ENCODE measurements at regions of chr7 and their contacts with region 1.

Region 1: GRCh38 chr7:86926732-86927131 is 132.7 kb downstream of the ELAPOR2 start:
- DNase-seq: no peak

Region 2: DNA sequence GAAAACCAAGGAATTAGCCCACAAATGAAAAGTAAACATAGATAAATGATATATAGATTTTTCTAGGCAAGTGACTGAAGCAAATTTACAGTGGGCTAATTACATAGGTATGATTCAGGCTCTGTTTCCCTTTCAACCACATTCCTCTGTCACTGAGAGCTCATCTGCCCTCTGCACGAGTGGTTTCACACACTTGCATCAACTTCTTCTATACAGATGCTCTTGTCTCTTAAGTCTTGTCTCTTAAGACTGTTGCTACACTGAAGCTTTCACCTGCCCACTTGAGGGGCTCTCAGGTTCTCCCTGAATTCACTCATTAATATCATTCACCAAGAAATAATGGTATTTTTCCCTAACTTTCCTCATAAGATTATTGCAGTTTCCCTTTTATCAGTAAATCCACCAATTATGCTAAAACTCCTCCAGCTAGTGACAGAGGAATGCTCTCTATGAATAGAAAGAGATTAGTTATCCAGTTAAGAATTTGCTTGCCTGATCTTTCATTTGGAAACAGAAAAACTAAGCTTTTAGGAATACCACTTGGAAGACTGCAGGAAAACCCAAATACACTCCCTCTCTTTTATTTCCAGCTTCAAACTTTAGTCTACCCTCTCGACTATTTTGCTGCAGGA is 37.0 kb after region 1 on chr7:
- intact Hi-C with region 1: no loop called
- DNase-seq: no peak

Region 3: GRCh38 chr7:87152107-87152844 is 225.5 kb after region 1 on chr7 and contains the start of gene DMTF1:
- intact Hi-C with region 1: loop called in 1 of 2 experiments (anchors 5 kb)
- DNase-seq: peak; percentile 99
- total RNA-seq, gene DMTF1: 57.7 to 63.6 TPM

Region 4: DNA sequence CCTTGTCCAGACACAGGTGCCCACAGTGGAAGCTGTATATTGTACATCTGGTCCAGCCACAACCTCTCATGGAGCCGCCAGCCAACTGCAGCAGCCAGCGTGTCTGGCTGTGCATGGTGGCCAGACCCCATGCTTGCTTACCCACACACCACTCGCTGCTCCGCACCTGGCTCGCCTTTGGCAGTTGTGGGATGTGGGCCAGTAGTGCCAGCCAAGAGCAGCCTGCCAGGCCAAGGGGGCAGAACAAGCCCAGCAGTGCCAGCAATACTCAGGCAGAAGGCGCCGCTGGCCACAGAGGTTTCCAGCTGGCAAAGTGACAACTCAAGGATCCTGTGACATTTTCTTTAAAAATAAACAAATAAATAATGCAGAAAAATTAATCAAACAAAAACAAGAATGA is 304.5 kb after region 1 on chr7:
- intact Hi-C with region 1: loop called in 1 of 2 experiments (anchors 10 kb)
- DNase-seq: no peak